K562 (cell line): ENCODE measurements at regions of chr19 and their contacts with region 1.

Region 1: DNA sequence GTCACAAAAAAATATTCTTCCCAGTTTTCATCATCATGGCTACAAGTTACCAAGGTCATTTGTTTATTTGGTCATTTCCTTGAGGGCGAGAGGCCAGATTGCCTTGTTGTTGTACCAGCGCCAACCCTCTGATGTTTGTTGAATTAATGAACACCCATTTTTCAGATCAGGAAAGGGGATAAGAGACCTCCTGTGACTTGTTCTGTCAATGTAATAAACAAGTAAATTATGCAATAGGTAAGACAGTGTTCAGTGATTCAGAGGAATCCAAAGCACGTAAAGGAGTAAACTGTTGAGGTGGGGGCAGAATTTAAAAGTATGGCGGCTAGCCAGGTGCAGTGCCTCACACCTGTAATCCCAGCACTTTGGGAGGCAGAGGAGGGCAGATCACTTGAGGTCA is 66.5 kb downstream of the ACSBG2 start:
- DNase-seq: no peak
- ATAC-seq: no peak
- H3K4me3 ChIP-seq: no peak overlapping the region
- H3K27ac ChIP-seq: no peak overlapping the region
- H3K4me1 ChIP-seq: peaks cover 8 to 33% of the 10 kb centered on the region in 2 experiments; a peak in 4 of 5 replicates
- H3K27me3 ChIP-seq: no peaks in the 10 kb centered on the region
- CTCF ChIP-seq: no peak
- EP300 ChIP-seq: no peak
- POLR2A ChIP-seq: no peak
- RAD21 ChIP-seq: no peak

Region 2: DNA sequence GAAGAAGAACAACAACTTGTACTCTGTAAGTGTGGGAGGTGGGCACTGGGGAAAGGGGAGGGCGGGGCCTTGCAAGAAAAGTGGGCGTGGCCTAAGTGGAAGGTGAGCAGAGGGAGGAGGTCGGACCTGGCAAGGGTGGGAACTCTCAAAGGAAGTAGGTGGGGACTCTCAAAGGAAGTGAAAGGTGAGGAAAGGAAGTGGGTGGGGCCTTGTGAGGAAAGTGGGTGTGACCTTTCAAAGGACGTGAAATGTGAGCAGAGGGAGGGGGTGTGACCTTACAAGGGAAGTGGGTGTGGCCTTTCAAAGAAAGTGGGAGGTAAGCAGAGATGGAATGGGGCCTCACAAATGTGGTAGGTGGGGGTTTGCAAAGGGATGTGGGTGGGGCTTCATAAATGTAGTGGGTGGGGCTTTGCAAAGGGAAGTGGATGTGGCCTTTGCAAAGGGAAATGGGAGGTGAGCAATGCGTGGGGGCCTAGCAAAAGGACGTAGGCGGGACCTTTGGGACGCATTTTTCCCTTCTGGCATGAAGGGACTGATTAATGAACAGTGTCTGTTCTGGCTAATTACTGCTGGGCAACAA is 40.6 kb before region 1 on chr19:
- CTCF ChIA-PET with region 1: no interaction called
- POLR2A ChIA-PET with region 1: no interaction called
- in situ Hi-C with region 1: no loop called
- intact Hi-C with region 1: loop called (anchors 5 kb)
- DNase-seq: peak; percentile 89 to 95 (median 91)
- ATAC-seq: peak; percentile 95
- H3K4me3 ChIP-seq: no peak overlapping the region
- H3K27ac ChIP-seq: peak overlapping the region; percentile 38; the same call in 2 of the 3 replicates
- H3K4me1 ChIP-seq: peaks cover 0 to 6% of the 10 kb centered on the region in 2 experiments; a peak in 2 of 5 replicates
- H3K27me3 ChIP-seq: no peaks in the 10 kb centered on the region
- CTCF ChIP-seq: no peak
- EP300 ChIP-seq: no peak
- POLR2A ChIP-seq: no peak
- RAD21 ChIP-seq: no peak

Region 3: DNA sequence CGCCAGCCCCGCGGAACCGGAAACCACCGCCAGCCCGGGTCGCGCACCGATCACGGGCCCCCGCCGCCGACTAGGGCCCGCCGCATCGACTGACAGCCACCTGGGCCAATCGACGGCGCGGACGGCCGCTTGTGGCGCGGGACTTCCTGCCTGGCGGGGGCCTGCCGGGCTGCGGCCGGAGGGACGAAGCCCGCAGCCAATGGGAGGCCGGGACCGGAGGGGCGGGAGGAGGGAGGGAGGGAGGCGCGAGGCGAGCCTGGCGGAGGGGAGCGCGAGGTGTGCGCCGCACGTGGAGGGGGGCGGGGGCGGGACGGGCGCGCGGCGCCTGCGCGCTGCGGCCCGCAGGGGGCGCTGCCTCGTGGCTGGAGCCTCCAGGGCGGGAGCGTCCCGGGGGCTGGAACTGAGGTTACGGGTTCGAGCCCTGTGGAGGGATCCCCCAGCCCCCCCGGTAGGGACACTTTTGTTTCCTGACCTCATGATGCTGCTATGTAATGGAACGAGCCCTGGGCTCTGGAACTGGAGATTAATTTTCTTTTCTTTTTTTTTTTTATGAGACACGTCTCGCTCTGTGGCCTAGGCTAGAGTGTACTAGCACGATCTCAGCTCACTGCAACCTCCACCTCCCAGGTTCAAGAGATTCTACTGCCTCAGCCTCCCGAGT is 78.1 kb after region 1 on chr19 and contains the start of gene MLLT1:
- CTCF ChIA-PET with region 1: no interaction called
- POLR2A ChIA-PET with region 1: no interaction called
- in situ Hi-C with region 1: no loop called
- intact Hi-C with region 1: no loop called
- DNase-seq: peak; percentile 98 to 100 (median 100)
- ATAC-seq: peak; percentile 97
- H3K4me3 ChIP-seq: peak within 1 kb of the TSS; percentile 98
- H3K27ac ChIP-seq: peak within 1 kb of the TSS; percentile 79
- H3K4me1 ChIP-seq: peaks cover 35 to 38% of the 10 kb centered on the region in 2 experiments
- H3K27me3 ChIP-seq: no peaks in the 10 kb centered on the region
- CTCF ChIP-seq: peak; percentile 45 to 78 (median 64); a peak in 5 of 6 replicates
- EP300 ChIP-seq: peak; percentile 21; the same call in 1 of the 2 replicates
- POLR2A ChIP-seq: no peak
- RAD21 ChIP-seq: peak; percentile 24 to 37; a peak in 2 of 4 replicates
- polyA plus RNA-seq, gene MLLT1: 0.23 to 0.35 TPM